ENCODE measurements at regions of chr2 and their contacts with region 1.

Region 1: GRCh38 chr2:164560181-164560792 is 61.0 kb downstream of the GRB14 start:
- DNase-seq: no peak
- ATAC-seq: no peak
- H3K4me3 ChIP-seq: peak overlapping the region in 5 of 10 donors; percentile 25 to 38 (median 31)
- H3K27ac ChIP-seq: peak overlapping the region in 4 of 10 donors; percentile 12 to 52 (median 38)
- H3K4me1 ChIP-seq: peaks cover 0 to 18% (median 10%) of the 10 kb centered on the region in 9 donors
- H3K27me3 ChIP-seq: no peaks in the 10 kb centered on the region
- CTCF ChIP-seq: peak; percentile 45 to 82 (median 73)

Region 2: GRCh38 chr2:164599966-164600589 is 39.8 kb after region 1 on chr2:
- intact Hi-C with region 1: loop called in 6 of 10 experiments (anchors 2 to 5 kb)
- DNase-seq: peak in 1 of 2 donors; percentile 40
- ATAC-seq: peak; percentile 42 to 91 (median 76)
- H3K4me3 ChIP-seq: no peak overlapping the region
- H3K27ac ChIP-seq: peak overlapping the region in 1 of 10 donors; percentile 19
- H3K4me1 ChIP-seq: peaks cover 0 to 6% (median 4%) of the 10 kb centered on the region in 9 donors
- H3K27me3 ChIP-seq: no peaks in the 10 kb centered on the region
- CTCF ChIP-seq: peak; percentile 48 to 81 (median 69)

Region 3: GRCh38 chr2:164706522-164706921 is 146.2 kb after region 1 on chr2:
- intact Hi-C with region 1: loop called in 6 of 10 experiments (anchors 5 to 10 kb)
- DNase-seq: no peak
- ATAC-seq: no peak
- H3K4me3 ChIP-seq: no peak overlapping the region
- H3K27ac ChIP-seq: no peak overlapping the region
- H3K4me1 ChIP-seq: no peaks in the 10 kb centered on the region
- H3K27me3 ChIP-seq: no peaks in the 10 kb centered on the region
- CTCF ChIP-seq: no peak

Region 4: DNA sequence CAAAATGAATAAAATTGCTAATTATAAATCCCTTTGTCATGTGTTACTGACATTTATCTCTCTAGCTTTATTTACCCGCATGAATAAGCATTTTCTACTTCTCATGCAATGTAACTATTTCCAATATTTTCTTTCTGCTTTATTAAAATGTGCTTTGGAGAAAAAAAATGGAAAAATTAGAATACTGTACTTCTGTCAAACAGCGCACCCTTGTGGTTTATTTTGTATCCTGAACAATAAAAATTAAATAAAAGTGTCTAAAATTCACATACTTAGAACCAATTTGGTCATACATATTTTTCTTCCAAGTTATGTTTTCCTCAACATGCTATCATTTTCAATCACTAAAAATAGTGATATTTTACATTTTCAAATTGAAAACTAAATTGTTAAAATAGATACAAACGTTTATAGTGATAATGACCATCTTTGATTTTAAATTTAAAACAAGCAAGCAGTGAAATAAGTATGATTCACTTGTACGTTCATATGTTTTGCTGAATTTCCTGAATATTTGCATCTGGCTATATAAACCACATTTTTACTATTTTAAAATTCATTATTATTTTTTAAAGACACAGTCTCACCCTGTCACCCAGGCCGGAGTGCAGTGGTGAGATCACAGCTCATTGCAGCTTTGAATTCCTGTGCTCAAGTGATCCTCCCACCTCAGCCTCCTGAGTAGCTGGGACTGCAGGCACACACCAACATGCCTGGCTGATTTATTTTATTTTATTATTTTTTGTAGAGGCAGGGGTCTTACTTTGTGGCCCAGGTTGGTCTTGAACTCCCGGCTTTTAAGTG is 156.9 kb after region 1 on chr2:
- intact Hi-C with region 1: loop called (anchors 1 to 10 kb)
- DNase-seq: no peak
- ATAC-seq: no peak
- H3K4me3 ChIP-seq: no peak overlapping the region
- H3K27ac ChIP-seq: no peak overlapping the region
- H3K4me1 ChIP-seq: peaks cover 0 to 21% (median 4%) of the 10 kb centered on the region in 9 donors
- H3K27me3 ChIP-seq: no peaks in the 10 kb centered on the region
- CTCF ChIP-seq: peak; percentile 43 to 72 (median 64)